ENCODE measurements at regions of chr19 and their contacts with region 1.

Region 1: GRCh38 chr19:49746206-49747091 is 16.7 kb downstream of the TSKS start:
- DNase-seq: peak; percentile 98

Region 2: DNA sequence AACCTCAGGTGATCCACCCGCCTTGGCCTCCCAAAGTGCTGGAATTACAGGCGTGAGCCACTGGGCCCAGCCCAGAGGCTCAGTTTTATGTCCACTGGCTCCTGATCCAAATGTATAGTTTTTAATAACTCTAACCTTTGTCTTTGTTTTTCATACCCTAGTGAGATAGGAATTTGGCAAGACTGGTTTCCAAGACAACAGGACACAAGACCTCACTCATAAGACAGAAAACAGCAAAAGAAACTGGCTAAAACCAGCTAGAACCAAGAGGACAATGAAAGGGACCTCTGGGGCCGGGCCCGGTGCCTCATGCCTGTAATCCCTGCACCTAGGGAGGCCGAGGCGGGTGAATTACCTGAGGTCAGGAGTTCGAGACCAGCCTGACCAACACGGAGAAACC is 27.9 kb before region 1 on chr19:
- CTCF ChIA-PET with region 1: no interaction called
- POLR2A ChIA-PET with region 1: interaction called, 10 read pairs
- DNase-seq: no peak

Region 3: GRCh38 chr19:49869441-49870176 is 123.2 kb after region 1 on chr19:
- CTCF ChIA-PET with region 1: no interaction called
- POLR2A ChIA-PET with region 1: no interaction called
- DNase-seq: peak; percentile 82